ENCODE measurements at regions of chr9 and their contacts with region 1.

Region 1: DNA sequence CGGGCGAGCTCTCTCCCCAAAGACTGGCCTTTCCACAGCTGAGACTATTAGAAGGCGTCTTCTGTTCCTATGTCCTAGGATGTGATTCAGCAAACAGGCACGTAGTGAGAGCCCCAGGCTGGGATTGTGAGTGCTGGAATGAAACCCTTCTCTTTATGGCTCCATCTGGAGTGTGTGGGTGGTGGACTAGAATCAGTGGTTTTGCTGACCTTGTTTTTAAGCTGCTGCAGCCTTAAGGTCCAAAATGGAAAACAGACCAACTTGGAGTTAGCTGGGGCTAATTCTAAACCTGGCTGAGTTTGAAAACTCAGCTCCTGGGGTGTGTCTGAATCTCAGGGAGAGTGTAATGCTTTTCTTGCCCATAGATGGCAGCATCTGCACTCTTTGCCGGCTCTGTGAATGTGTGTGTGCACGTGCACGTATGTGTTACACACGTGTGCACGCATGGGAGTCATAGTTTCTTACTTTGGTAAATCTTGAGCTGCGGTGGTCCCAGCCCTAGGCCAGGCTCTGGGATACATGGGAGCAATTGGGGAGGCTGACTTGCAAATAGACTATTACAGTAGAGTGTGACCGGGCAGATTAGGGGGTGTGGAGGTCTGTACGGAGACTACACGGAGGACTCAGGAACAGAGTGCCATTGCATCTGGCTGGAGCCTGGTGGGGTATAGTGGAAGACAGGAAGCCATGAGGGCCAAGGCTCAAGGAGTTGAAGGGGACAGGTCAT is 10.7 kb downstream of the GSN start:
- DNase-seq: peak in 1 of 2 donors; percentile 83
- ATAC-seq: peak; percentile 55 to 68 (median 62)
- H3K4me3 ChIP-seq: peak overlapping the region in 2 of 10 donors; percentile 1 to 8
- H3K27ac ChIP-seq: peak overlapping the region; percentile 4 to 100 (median 98)
- H3K4me1 ChIP-seq: peaks cover 40 to 94% (median 75%) of the 10 kb centered on the region in 9 donors
- H3K27me3 ChIP-seq: no peaks in the 10 kb centered on the region
- CTCF ChIP-seq: peak; percentile 74 to 93 (median 83)

Region 2: GRCh38 chr9:121098567-121099198 is 180.0 kb before region 1 on chr9:
- intact Hi-C with region 1: no loop called
- DNase-seq: no peak
- ATAC-seq: no peak
- H3K4me3 ChIP-seq: no peak overlapping the region
- H3K27ac ChIP-seq: no peak overlapping the region
- H3K4me1 ChIP-seq: no peaks in the 10 kb centered on the region
- H3K27me3 ChIP-seq: no peaks in the 10 kb centered on the region
- CTCF ChIP-seq: no peak

Region 3: DNA sequence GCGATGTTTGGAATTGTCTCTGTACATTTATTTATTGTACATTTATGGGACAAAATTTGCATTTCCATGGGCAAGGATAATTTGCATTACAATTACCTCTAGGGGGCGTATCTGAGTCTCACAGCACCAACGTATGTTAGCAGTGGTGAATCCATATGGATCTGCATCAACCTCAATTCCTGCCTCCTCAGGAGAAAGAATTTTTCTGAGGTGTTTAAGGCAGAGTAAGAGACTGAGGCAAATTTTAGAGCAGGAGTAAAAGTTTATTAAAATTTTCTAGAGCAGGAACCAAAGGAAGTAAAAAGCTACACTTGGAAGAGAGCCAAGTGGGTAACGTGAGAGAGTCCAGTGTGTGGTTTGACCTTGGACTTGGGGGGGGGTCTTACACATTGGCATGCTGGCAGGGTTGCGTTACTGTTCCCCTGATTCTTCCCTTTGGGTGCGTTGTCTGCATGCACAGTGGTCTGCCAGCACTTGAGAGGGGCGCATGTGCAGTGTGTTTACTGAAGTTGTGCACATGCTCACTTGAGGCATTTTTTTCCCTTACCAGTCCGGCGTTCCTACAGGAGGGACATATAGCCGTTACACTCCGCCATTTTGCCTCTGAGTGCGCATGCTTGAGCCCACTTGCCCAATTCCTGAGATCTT is 56.0 kb before region 1 on chr9:
- intact Hi-C with region 1: loop called in 1 of 10 experiments (anchors 10 kb)
- DNase-seq: no peak
- ATAC-seq: peak in 5 of 8 donors; percentile 37 to 69 (median 44)
- H3K4me3 ChIP-seq: no peak overlapping the region
- H3K27ac ChIP-seq: no peak overlapping the region
- H3K4me1 ChIP-seq: peaks cover 0 to 23% (median 0%) of the 10 kb centered on the region in 9 donors
- H3K27me3 ChIP-seq: no peaks in the 10 kb centered on the region
- CTCF ChIP-seq: peak; percentile 54 to 84 (median 74)

Region 4: GRCh38 chr9:121312166-121312565 is 33.5 kb after region 1 on chr9:
- intact Hi-C with region 1: loop called in 6 of 10 experiments (anchors 5 kb)
- DNase-seq: no peak
- ATAC-seq: no peak
- H3K4me3 ChIP-seq: no peak overlapping the region
- H3K27ac ChIP-seq: peak overlapping the region in 1 of 10 donors; percentile 24
- H3K4me1 ChIP-seq: peaks cover 4 to 89% (median 18%) of the 10 kb centered on the region in 9 donors
- H3K27me3 ChIP-seq: no peaks in the 10 kb centered on the region
- CTCF ChIP-seq: no peak

Region 5: DNA sequence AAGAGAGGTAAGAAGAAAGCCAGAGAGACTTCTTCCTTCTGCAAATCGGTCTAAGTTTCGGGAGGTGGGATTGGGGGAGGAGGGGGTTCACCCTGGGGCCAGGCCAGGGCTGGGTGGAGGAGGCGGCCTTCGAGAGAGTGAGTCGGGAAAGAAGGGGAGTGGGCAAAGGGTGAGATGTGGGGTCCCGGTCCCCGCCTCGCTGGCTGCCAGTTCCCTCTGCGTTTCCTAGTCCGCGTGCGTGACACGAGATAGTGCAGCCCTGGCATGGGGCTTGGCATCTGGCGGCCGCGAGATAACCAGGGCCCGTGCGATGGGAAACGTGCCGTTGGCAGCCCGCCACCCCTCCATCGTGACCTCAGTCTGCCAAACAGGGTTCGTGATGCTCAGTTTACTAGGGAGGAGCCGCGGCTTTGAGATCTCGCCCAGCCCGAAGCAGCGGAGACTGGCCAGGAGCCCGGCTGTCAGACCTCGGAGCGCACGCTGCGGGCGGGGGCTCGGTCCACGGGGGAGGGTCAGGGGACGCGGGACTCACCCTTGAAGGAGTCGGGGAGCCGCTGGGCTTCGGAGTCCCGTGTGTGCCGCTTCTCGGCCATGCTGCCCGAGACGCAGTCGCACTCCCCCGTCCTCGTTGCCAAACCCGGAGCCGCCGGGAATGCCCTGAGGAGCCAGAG is 91.0 kb after region 1 on chr9 and contains the start of gene STOM:
- intact Hi-C with region 1: loop called in 3 of 10 experiments (anchors 5 kb)
- DNase-seq: peak; percentile 92 to 93
- ATAC-seq: peak; percentile 69 to 91 (median 76)
- H3K4me3 ChIP-seq: peak within 1 kb of the TSS; percentile 50 to 86 (median 78)
- H3K27ac ChIP-seq: peak within 1 kb of the TSS; percentile 88 to 99 (median 96)
- H3K4me1 ChIP-seq: peaks cover 3 to 87% (median 77%) of the 10 kb centered on the region in 9 donors
- H3K27me3 ChIP-seq: no peaks in the 10 kb centered on the region
- CTCF ChIP-seq: no peak
- total RNA-seq, gene STOM: 104 to 389 (median 181) TPM